ENCODE measurements at regions of chr1 and their contacts with region 1.

Region 1: DNA sequence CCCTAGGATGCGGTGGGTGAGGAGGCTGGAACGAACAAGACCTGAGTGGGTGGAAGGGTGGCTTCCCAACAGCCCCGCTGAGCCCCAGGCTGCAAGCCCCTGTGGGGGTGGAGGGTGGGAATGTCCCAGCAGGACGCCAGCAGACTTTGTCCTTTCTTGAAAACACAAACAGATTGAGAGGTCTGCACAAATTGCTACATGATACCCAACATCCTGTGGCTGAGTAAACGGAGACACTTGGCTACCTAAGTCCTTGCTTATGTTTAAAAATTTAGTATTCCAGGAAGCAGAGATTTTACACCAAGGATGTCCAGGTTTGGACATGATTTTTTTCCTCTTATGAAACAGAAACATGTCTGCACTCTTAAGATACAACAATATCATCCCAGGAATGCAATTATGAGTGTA is 11.8 kb upstream of the F3 start:
- DNase-seq: no peak
- ATAC-seq: no peak
- H3K4me3 ChIP-seq: no peak overlapping the region
- H3K4me3 Mint-ChIP-seq: no peak overlapping the region
- H3K27ac ChIP-seq: no peak overlapping the region
- H3K27ac Mint-ChIP-seq: no peak overlapping the region
- H3K4me1 ChIP-seq: no peaks in the 10 kb centered on the region
- H3K4me1 Mint-ChIP-seq: no peaks in the 10 kb centered on the region
- H3K27me3 ChIP-seq: peaks cover 0 to 3% of the 10 kb centered on the region in 2 experiments
- H3K27me3 Mint-ChIP-seq: peaks cover 4 to 14% of the 10 kb centered on the region in 2 donors

Region 2: DNA sequence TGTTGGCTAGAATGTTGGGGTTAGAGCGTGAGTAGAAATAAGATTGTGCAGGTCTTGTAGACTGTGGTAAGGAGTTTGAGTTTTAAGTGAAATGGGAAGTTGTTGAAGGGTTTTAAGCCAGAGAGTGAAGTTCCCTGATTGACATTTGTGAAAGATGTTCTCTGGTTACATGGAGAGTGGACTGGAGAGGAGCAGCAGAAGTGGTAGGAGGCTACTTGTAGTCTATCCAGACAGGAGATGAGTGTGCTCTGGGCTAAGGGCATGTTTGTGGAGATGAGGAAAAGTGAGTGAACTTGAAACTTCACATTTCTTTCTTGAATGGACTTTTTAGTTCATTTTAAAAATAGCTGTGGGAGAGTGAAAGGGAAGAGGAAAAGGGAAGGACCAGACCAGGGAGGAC is 48.7 kb before region 1 on chr1:
- CTCF ChIA-PET with region 1: no interaction called
- POLR2A ChIA-PET with region 1: interaction called in 1 of 2 experiments, 12 read pairs
- DNase-seq: no peak
- ATAC-seq: no peak
- H3K4me3 ChIP-seq: no peak overlapping the region
- H3K4me3 Mint-ChIP-seq: no peak overlapping the region
- H3K27ac ChIP-seq: no peak overlapping the region
- H3K27ac Mint-ChIP-seq: no peak overlapping the region
- H3K4me1 ChIP-seq: no peaks in the 10 kb centered on the region
- H3K4me1 Mint-ChIP-seq: peaks cover 0 to 7% (median 2%) of the 10 kb centered on the region in 3 donors
- H3K27me3 ChIP-seq: no peaks in the 10 kb centered on the region
- H3K27me3 Mint-ChIP-seq: no peaks in the 10 kb centered on the region

Measured in T-cell (primary cell).